RWPE1 (cell line): ENCODE measurements at regions of chr9 and their contacts with region 1.

Region 1: GRCh38 chr9:123637945-123638634 is 282.1 kb downstream of the CRB2 start:
- DNase-seq: no peak
- H3K27ac ChIP-seq: no peak overlapping the region
- CTCF ChIP-seq: no peak

Region 2: GRCh38 chr9:123651273-123651672 is 13.2 kb after region 1 on chr9:
- CTCF ChIA-PET with region 1: interaction called, 11 read pairs
- POLR2A ChIA-PET with region 1: no interaction called
- DNase-seq: no peak
- H3K27ac ChIP-seq: no peak overlapping the region
- CTCF ChIP-seq: no peak